GM10248 (cell line): ENCODE measurements at regions of chr1 and their contacts with region 1.

Region 1: DNA sequence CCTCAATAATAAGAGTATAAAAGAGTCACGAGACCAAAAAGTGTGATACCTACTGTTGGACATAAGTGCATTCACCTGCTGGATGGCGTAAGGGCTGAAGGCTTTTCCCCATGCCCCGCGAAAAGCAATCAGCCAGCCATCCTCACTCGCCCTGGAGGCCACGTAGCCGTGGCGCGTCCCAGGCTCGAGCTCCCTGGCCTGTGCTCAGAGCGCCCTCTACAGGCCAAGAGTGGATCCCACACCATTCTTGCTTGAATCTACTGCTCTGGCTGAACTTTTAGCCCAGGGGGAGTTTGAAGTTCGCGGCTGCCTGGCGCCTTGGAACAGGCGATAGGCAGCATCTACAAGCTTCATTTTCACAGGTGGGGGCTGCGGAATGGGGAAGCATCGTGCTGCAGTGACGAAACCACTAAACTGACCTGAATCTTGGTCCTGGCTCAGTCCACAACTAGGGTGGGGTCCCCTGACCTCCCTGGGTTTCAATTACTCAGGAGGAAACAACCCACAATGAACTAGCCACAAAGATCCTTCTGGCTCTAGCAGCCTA is 70.3 kb upstream of the SERBP1 start:
- DNase-seq: peak; percentile 93
- CTCF ChIP-seq: peak; percentile 98

Region 2: DNA sequence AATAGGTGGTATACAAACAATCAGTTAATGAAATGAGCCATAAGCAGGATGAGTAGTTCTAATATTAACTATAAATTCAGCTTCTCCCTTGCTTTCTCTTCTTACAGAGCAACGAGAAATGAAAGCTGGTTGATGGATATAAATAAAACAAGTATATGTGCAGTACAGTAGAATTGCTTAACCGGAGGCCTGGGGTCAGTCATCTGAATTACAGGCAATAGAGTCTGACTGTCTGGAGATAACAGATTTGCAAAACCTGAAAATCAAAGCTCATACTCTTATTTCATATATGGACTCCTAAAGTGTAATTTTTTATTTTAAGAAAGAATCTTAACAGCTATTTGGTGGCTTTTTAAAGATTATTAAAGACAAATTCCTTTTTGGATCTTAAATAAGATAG is 1009.7 kb before region 1 on chr1:
- CTCF ChIA-PET with region 1: no interaction called
- POLR2A ChIA-PET with region 1: no interaction called
- DNase-seq: no peak
- CTCF ChIP-seq: no peak

Region 3: GRCh38 chr1:67149179-67149770 is 351.2 kb before region 1 on chr1:
- CTCF ChIA-PET with region 1: interaction called, 20 read pairs
- POLR2A ChIA-PET with region 1: no interaction called
- DNase-seq: peak; percentile 73
- CTCF ChIP-seq: peak; percentile 65

Region 4: DNA sequence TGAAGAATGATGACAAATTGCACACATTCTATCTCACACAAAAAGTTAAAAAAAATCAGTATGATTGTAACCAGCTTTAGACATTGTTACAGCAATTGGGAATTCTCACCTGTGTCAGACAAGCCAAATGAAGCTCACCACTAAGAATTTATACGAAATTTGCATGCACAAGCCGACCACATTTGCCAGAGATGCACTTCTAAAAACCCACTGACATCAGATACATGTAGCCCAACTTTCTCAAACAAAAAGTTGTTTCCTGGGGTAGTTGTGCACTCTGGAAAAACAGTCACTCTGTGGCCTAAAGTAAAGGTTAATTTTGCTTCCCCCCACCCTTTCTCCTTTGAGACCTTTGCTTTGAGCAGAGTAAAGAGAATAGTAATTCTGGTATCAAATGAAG is 260.7 kb before region 1 on chr1:
- CTCF ChIA-PET with region 1: interaction called, 10 read pairs
- POLR2A ChIA-PET with region 1: no interaction called
- DNase-seq: no peak
- CTCF ChIP-seq: no peak

Region 5: DNA sequence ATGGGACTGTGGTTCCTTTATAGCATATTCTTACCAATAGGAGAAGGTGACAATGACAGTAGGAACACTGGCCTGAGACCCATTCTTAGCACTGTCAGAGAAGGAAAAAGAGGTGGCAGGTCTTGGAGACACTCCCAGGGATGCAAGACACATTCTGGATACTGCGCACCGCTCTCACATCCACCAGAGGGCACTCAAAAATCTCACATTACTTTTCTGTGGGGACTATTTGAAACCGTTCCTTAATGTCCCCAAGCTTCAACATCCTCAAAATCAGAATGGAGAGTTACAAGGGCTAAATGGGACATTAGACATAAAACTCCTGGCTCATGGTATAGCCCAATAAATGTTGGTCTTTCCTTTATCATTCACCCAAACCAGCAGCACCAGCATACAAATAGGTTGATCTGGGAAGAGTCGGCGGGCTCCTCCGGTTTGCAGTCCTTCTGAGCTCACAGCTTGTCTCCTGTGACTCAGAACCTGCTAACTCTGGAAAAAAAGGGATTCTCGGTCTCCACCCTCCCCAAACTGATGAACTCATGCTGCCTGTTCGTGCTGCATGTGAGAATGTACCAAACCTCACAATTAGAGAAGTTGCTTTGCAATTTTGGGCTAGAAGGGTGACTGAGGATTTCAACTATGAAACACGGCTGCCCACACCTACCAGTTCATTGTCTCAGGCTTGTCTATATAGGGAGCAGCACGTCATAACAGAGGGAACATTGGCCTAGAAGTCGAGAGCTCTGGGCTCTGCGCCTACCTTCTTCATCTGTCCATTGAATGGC is 152.6 kb before region 1 on chr1:
- CTCF ChIA-PET with region 1: interaction called, 26 read pairs
- POLR2A ChIA-PET with region 1: no interaction called
- DNase-seq: peak; percentile 36
- CTCF ChIP-seq: peak; percentile 41

Region 6: DNA sequence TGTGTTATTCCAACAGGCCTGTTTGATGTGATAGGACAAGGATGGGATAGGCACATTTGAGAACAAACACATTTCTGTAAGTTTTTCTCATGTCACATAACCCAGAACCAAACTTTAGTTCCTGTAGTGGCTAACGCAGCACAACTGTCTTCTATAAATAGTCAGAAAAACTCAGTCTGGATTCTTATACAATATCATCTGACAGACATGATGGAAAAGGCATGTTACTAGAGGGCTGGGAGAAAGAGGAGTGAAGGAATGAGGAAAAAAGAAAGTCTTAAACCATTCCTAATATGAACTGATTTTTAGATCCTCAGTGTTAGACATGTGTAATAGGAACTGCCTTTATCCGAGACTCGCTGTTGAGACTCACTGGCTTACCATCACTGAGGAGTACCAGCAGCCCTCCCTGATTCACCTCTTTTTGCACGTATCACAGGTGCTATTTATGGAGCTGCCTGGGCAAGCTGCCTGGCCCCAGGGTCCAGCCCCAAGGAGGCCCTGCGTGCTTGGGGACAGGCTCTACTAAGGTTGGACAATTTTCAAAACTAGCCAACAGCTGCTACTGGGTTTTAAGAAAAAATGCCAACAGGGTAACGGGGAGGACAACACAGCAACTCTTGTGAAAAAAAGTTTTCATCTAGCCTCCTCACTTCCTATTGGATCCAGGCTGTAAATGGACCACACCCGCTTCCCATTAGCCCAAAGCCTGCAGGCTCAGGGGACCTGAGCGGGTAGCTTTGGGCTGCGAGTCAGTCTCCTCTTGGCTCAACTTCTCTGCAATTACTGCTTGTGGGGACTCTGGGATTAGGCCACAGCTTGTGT is 39.6 kb before region 1 on chr1:
- CTCF ChIA-PET with region 1: interaction called, 22 read pairs
- POLR2A ChIA-PET with region 1: no interaction called
- DNase-seq: no peak
- CTCF ChIP-seq: no peak

Region 7: DNA sequence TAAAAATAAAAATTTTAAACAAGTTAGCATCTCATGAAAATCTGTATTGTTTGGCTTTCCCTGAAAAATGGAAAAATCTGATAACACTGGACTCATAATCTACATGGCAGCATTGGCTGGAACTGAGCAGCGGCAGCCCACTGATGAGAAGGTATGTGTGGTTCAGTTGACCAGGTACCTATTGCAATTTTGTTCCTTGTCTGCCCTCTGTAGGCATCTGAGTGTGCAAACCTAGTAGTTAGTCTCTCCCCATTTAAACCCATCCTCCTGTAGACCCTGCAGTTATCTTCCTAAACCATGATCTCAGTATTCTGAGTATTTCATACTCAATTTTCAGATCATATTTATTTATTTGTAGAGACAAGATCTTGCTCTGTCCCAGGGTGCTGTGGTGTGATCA is 10.8 kb before region 1 on chr1:
- CTCF ChIA-PET with region 1: interaction called, 144 read pairs
- POLR2A ChIA-PET with region 1: no interaction called
- DNase-seq: peak; percentile 49
- CTCF ChIP-seq: peak; percentile 29

Region 8: DNA sequence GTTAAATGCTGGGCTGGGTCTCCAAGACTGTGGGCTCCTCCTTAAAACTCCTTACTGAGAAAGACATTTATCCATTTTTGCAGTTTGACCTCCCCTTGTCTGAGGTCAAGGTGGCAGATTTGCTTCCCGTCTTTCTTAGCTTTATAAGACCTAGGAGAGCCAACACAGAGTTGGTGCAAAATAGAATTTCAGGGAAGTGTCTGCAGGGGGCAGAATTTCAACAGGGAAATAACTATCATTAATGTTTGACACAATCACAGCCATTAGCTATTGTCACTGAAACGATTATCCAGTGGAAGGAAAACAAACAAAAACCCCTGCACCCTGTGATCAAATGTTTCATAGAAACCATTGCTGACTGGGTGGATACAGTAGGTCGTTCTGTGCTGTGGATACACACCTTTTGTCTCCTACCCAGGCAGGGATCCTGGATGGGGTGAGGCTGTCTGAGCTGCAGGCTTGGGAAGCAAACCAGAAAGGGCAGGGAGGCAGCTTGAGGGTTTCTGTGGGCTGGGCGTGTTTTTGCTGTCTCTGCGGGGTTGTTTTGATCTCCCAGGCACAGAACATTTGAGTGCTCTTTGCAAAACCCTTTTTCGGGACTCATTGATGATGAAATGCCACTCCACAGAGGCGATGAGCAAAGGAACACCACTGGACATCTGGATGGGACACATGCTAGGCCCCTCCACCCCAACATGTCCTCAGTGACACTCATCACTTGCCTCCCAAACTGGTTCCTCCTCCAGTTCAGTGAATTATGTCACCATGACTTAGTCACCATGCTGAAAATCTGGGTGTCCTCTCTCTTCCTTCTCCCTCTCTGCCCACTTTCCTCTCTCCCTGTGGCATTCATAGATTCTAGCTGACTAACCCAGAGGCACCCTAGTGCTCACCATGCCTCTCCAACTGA is 23.9 kb after region 1 on chr1:
- CTCF ChIA-PET with region 1: interaction called, 40 read pairs
- POLR2A ChIA-PET with region 1: no interaction called
- DNase-seq: no peak
- CTCF ChIP-seq: no peak

Region 9: DNA sequence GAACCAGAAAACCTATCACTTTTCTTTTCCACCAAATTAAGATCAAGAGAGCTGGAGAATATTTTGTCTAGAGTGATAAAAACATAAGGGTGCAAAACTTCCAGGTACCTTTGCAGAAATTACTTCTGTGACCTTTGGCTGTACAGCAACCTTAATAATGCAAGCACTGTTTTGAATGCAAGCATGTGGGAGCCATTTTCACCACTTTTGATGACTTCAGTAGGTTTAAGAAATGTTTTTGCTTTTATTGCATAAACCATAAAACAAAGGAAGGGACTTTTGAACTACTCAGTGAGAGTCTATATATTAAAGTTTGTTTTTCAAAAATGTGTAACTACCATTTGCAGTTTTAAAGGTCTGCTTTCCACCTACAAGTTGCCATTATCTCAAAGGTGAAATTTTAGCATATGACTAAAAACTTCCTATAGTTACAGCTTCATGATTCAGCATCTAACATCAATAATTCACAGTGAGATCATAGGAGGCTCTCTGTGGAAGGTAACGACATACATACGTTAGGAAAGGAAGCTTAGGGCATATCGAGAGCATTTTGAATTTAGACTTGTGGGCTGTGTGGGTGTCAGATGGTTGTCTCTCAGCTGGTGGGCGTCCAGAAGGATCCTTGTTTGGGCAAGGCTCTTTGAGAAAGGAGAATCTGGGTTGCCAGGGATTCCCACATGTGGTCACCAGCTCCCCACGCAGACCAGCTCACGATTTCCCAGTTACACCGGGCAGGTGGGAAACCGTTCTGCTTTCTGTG is 183.5 kb after region 1 on chr1:
- CTCF ChIA-PET with region 1: no interaction called
- POLR2A ChIA-PET with region 1: no interaction called
- DNase-seq: peak; percentile 27
- CTCF ChIP-seq: no peak